Vagina (tissue), 2 donors: ENCODE measurements at regions of chr11 and their contacts with region 1.

Region 1: DNA sequence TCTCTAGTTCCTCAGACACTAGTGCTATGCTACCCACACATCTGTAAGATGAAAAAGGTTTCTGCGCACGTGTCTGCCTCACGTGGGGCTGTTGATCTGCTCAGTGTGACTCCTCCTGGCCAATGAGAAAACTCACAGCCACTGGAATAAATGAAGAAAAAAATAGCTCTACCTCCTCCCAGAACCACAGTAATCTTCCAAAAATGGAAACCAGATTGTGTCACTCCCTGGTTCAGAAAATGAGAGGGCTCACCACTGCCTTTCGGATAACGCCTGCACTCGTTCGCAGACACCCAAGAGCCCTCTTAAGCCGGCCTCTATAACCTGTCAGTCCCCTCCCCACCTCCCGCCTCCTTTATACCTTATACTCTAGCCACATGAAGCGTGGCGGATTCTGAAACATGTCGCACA is 5.1 kb downstream of the APBB1 start:
- DNase-seq: no peak
- H3K4me3 ChIP-seq: no peak overlapping the region
- H3K27ac ChIP-seq: no peak overlapping the region
- H3K4me1 ChIP-seq: peaks cover 36% of the 10 kb centered on the region
- H3K27me3 ChIP-seq: no peaks in the 10 kb centered on the region
- CTCF ChIP-seq: no peak
- POLR2A ChIP-seq: no peak

Region 2: GRCh38 chr11:6397636-6398035 is 16.2 kb before region 1 on chr11:
- intact Hi-C with region 1: loop called (anchors 2 kb)
- DNase-seq: no peak
- H3K4me3 ChIP-seq: no peak overlapping the region
- H3K27ac ChIP-seq: no peak overlapping the region
- H3K4me1 ChIP-seq: peaks cover 8% of the 10 kb centered on the region
- H3K27me3 ChIP-seq: no peaks in the 10 kb centered on the region
- CTCF ChIP-seq: no peak
- POLR2A ChIP-seq: no peak

Region 3: DNA sequence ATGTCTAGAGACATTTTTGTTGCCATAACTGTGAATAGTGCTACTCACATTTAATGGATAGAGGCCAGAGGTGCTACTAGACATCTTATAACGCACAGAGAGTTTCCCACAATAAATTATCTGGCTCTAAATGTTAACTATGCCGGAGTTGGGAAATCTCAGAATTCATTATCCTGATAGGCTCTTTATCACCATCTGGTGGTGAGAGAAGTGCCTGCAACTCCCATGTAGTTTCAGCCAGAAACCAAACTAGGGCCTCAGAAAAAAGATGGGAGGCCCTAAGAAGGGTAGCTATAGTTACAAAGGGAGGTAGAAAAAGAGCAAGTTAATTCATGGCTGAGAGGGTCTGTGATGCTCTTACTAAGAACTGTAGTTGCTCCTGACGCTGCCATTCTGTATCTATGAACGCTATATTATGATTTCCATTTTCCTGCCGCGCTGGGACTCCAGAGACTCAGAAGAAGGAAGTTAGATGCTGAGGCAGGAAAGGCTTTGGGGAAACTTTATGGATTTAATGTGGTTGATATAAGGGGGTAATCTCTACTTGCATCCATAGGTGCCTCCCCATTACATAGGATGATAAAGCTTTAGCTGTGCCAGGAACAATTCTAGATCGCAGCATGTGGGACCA is 292.2 kb after region 1 on chr11:
- intact Hi-C with region 1: no loop called
- DNase-seq: no peak
- H3K4me3 ChIP-seq: no peak overlapping the region
- H3K27ac ChIP-seq: no peak overlapping the region
- H3K4me1 ChIP-seq: no peaks in the 10 kb centered on the region
- H3K27me3 ChIP-seq: no peaks in the 10 kb centered on the region
- CTCF ChIP-seq: peak; percentile 46 to 88 (median 84)
- POLR2A ChIP-seq: no peak